CD4-positive, alpha-beta T cell (primary cell): ENCODE measurements at regions of chr4 and their contacts with region 1.

Region 1: GRCh38 chr4:81084634-81085033 is 54.1 kb downstream of the BMP3 start:
- DNase-seq: no peak
- ATAC-seq: no peak
- H3K4me3 ChIP-seq: no peak overlapping the region
- H3K4me3 Mint-ChIP-seq: no peak overlapping the region
- H3K27ac ChIP-seq: no peak overlapping the region
- H3K27ac Mint-ChIP-seq: no peak overlapping the region
- H3K4me1 ChIP-seq: no peaks in the 10 kb centered on the region
- H3K4me1 Mint-ChIP-seq: no peaks in the 10 kb centered on the region
- H3K27me3 ChIP-seq: no peaks in the 10 kb centered on the region
- H3K27me3 Mint-ChIP-seq: no peaks in the 10 kb centered on the region
- CTCF ChIP-seq: no peak

Region 2: GRCh38 chr4:81255524-81255923 is 170.9 kb after region 1 on chr4:
- CTCF ChIA-PET with region 1: no interaction called
- POLR2A ChIA-PET with region 1: no interaction called
- intact Hi-C with region 1: loop called in 1 of 2 experiments (anchors 5 kb)
- DNase-seq: no peak
- ATAC-seq: no peak
- H3K4me3 ChIP-seq: no peak overlapping the region
- H3K4me3 Mint-ChIP-seq: no peak overlapping the region
- H3K27ac ChIP-seq: no peak overlapping the region
- H3K27ac Mint-ChIP-seq: no peak overlapping the region
- H3K4me1 ChIP-seq: no peaks in the 10 kb centered on the region
- H3K4me1 Mint-ChIP-seq: no peaks in the 10 kb centered on the region
- H3K27me3 ChIP-seq: peaks cover 0 to 2% of the 10 kb centered on the region in 2 experiments
- H3K27me3 Mint-ChIP-seq: no peaks in the 10 kb centered on the region
- CTCF ChIP-seq: no peak